CD14-positive monocyte (primary cell): ENCODE measurements at regions of chr13 and their contacts with region 1.

Region 1: DNA sequence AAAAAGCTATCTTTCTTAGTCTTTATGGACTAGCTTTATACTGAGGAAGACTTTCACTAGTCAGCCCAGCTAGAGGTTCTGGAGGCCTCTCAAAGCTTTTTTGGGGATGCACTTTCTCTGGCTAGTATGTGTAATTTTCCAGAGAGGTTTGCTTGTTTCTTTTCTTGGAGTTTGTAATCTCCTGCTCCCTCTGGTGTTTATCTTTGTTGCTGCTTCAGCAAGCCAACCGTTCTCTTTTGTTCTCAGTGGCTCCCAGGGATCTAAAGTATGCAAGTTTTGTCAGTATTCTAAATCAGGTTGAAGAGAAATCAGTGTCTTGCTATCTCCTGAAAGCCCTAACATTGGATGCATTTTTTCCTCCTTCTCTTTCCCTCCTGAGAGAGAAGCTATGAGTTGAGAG is 121.1 kb upstream of the MYO16 start:
- DNase-seq: peak; percentile 14 to 36 (median 28)
- H3K4me3 ChIP-seq: no peak overlapping the region
- H3K4me3 Mint-ChIP-seq: no peak overlapping the region
- H3K27ac ChIP-seq: no peak overlapping the region
- H3K27ac Mint-ChIP-seq: no peak overlapping the region
- H3K4me1 ChIP-seq: no peaks in the 10 kb centered on the region
- H3K4me1 Mint-ChIP-seq: no peaks in the 10 kb centered on the region
- H3K27me3 ChIP-seq: no peaks in the 10 kb centered on the region
- H3K27me3 Mint-ChIP-seq: peaks cover 0 to 2% (median 0%) of the 10 kb centered on the region in 3 donors
- CTCF ChIP-seq: peak; percentile 55

Region 2: GRCh38 chr13:107807306-107808073 is 700.8 kb before region 1 on chr13:
- intact Hi-C with region 1: no loop called
- DNase-seq: no peak
- H3K4me3 ChIP-seq: no peak overlapping the region
- H3K4me3 Mint-ChIP-seq: no peak overlapping the region
- H3K27ac ChIP-seq: no peak overlapping the region
- H3K27ac Mint-ChIP-seq: no peak overlapping the region
- H3K4me1 ChIP-seq: no peaks in the 10 kb centered on the region
- H3K4me1 Mint-ChIP-seq: no peaks in the 10 kb centered on the region
- H3K27me3 ChIP-seq: no peaks in the 10 kb centered on the region
- H3K27me3 Mint-ChIP-seq: peaks cover 0 to 2% (median 0%) of the 10 kb centered on the region in 3 donors
- CTCF ChIP-seq: no peak

Region 3: DNA sequence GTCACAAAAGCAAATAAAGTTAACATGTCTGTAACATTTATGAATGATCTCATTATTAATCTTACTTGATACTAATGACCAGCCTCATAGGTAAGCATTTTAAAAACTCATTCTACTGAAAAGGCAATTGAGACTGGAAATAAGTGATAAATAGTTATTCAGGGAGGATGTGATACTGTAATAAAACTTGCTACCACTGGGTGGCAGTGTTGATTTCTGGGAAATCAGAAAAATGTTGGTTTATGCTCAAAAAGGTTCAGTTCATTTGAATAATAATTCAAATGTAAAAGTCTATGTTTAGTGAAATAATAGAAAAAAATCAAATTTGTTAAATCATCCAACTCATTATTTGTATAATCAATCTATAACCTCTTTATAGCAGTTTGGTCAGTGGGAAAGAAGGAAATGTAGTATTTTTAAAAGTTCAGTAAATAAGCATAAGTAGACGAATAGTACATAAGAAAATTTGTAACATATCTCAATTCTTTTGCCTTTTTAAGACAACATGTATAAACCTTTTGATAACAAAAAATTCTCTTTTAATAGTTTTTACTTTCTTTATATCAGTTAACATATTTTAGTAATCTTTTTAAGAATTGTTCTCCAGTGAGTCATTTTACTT is 280.5 kb before region 1 on chr13:
- intact Hi-C with region 1: loop called in 1 of 2 experiments (anchors 10 kb)
- DNase-seq: peak; percentile 38 to 53 (median 46)
- H3K4me3 ChIP-seq: no peak overlapping the region
- H3K4me3 Mint-ChIP-seq: no peak overlapping the region
- H3K27ac ChIP-seq: no peak overlapping the region
- H3K27ac Mint-ChIP-seq: peak overlapping the region in 1 of 7 donors; percentile 25
- H3K4me1 ChIP-seq: no peaks in the 10 kb centered on the region
- H3K4me1 Mint-ChIP-seq: peaks cover 9% of the 10 kb centered on the region
- H3K27me3 ChIP-seq: no peaks in the 10 kb centered on the region
- H3K27me3 Mint-ChIP-seq: no peaks in the 10 kb centered on the region
- CTCF ChIP-seq: peak; percentile 90

Region 4: GRCh38 chr13:108322206-108322824 is 185.9 kb before region 1 on chr13:
- intact Hi-C with region 1: loop called in 1 of 2 experiments (anchors 5 kb)
- DNase-seq: peak; percentile 29 to 71 (median 63)
- H3K4me3 ChIP-seq: peak overlapping the region in 1 of 3 experiments; percentile 17
- H3K4me3 Mint-ChIP-seq: peak overlapping the region in 1 of 2 donors; percentile 59
- H3K27ac ChIP-seq: peak overlapping the region in 1 of 2 donors; percentile 33
- H3K27ac Mint-ChIP-seq: peak overlapping the region; percentile 53 to 90 (median 74)
- H3K4me1 ChIP-seq: peaks cover 44 to 48% of the 10 kb centered on the region in 2 donors
- H3K4me1 Mint-ChIP-seq: peaks cover 48% of the 10 kb centered on the region
- H3K27me3 ChIP-seq: no peaks in the 10 kb centered on the region
- H3K27me3 Mint-ChIP-seq: peaks cover 0 to 4% (median 0%) of the 10 kb centered on the region in 3 donors
- CTCF ChIP-seq: peak; percentile 89

Region 5: GRCh38 chr13:108451121-108451520 is 57.1 kb before region 1 on chr13:
- intact Hi-C with region 1: no loop called
- DNase-seq: no peak
- H3K4me3 ChIP-seq: no peak overlapping the region
- H3K4me3 Mint-ChIP-seq: no peak overlapping the region
- H3K27ac ChIP-seq: no peak overlapping the region
- H3K27ac Mint-ChIP-seq: no peak overlapping the region
- H3K4me1 ChIP-seq: no peaks in the 10 kb centered on the region
- H3K4me1 Mint-ChIP-seq: no peaks in the 10 kb centered on the region
- H3K27me3 ChIP-seq: no peaks in the 10 kb centered on the region
- H3K27me3 Mint-ChIP-seq: peaks cover 0 to 3% (median 0%) of the 10 kb centered on the region in 3 donors
- CTCF ChIP-seq: no peak